Gastrocnemius medialis (tissue), 4 donors: ENCODE measurements at regions of chr22 and their contacts with region 1.

Region 1: DNA sequence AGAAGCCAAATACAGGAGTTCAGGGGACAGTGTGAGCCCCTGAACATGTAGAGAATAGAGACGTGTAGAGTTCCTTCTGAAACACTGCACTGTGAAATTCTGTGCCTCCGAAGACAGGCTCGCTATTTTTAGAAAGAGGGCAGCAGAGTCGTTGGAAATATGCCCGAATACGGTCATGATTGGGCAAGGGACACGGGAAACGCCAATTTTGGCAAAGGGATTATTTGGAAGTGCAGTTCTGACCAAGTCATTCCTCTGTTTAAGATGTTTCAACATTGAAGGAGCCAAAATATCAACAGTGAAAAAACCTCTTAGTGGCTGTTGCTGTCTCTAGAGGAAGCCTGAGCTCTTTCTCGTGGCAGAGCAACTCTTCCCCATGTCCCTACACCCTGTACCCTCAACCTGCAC is 9.5 kb upstream of the CBX6 start:
- DNase-seq: peak; percentile 55 to 75
- ATAC-seq: peak; percentile 91
- H3K4me3 ChIP-seq: peak overlapping the region in 3 of 4 donors; percentile 7 to 31 (median 11)
- H3K27ac ChIP-seq: peak overlapping the region; percentile 70 to 85 (median 76)
- H3K4me1 ChIP-seq: peaks cover 9 to 16% of the 10 kb centered on the region in 2 donors
- H3K27me3 ChIP-seq: no peaks in the 10 kb centered on the region
- CTCF ChIP-seq: no peak
- POLR2A ChIP-seq: peak in 1 of 2 donors; percentile 7

Region 2: GRCh38 chr22:39117585-39118191 is 236.2 kb after region 1 on chr22:
- in situ Hi-C with region 1: loop called in 2 of 4 experiments (anchors 10 kb)
- intact Hi-C with region 1: no loop called
- DNase-seq: no peak
- ATAC-seq: no peak
- H3K4me3 ChIP-seq: no peak overlapping the region
- H3K27ac ChIP-seq: no peak overlapping the region
- H3K4me1 ChIP-seq: no peaks in the 10 kb centered on the region
- H3K27me3 ChIP-seq: peaks cover 24 to 45% (median 39%) of the 10 kb centered on the region in 3 donors
- CTCF ChIP-seq: peak in 1 of 5 experiments; percentile 7
- POLR2A ChIP-seq: no peak